ENCODE measurements at regions of chr20 and their contacts with region 1.

Region 1: DNA sequence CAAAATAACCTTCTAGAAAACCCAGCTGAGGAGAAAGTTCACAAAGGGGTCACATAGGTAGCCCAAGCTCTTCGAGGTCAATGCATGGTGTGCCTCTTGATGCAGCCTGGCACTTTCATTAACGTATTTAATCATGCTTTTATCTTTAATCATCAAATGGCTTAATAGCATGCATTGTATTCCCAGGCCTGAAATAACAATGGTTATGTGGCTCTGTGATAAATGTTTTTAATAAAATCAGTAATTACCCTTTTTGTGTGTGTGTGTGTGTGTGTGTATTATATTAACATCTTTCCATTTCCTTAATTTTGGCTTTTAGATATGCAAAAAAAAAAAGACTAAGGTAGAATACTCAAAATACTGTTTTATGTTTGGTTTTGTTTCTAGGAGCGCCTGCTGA is 681.8 kb downstream of the PTPRT start:
- DNase-seq: no peak
- H3K4me3 ChIP-seq: no peak overlapping the region
- H3K27ac ChIP-seq: no peak overlapping the region
- H3K4me1 ChIP-seq: no peaks in the 10 kb centered on the region
- H3K27me3 ChIP-seq: no peaks in the 10 kb centered on the region
- CTCF ChIP-seq: no peak

Region 2: DNA sequence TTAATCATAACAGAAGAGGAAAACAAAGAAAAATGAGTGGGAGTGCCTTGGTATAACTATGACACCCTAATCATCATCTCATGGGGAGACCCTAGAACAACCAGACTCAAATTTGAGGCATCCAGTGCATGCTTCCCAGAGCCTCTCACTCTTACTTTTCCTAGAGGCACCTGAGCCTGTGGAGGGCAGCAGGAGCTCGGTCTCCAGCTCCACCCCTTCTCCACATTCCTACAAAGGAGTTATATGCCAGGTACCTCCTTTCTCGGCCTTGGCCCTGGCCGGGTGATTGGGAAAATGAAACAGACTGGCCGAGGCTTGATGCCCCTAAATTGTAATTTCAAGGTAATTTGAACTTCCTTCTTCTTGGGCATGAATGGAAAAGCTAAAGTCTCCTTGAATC is 128.5 kb before region 1 on chr20:
- intact Hi-C with region 1: loop called (anchors 5 kb)
- DNase-seq: no peak
- H3K4me3 ChIP-seq: no peak overlapping the region
- H3K27ac ChIP-seq: no peak overlapping the region
- H3K4me1 ChIP-seq: no peaks in the 10 kb centered on the region
- H3K27me3 ChIP-seq: no peaks in the 10 kb centered on the region
- CTCF ChIP-seq: no peak

Region 3: GRCh38 chr20:42447270-42447669 is 60.6 kb before region 1 on chr20:
- intact Hi-C with region 1: no loop called
- DNase-seq: no peak
- H3K4me3 ChIP-seq: no peak overlapping the region
- H3K27ac ChIP-seq: no peak overlapping the region
- H3K4me1 ChIP-seq: no peaks in the 10 kb centered on the region
- H3K27me3 ChIP-seq: no peaks in the 10 kb centered on the region
- CTCF ChIP-seq: no peak

Region 4: DNA sequence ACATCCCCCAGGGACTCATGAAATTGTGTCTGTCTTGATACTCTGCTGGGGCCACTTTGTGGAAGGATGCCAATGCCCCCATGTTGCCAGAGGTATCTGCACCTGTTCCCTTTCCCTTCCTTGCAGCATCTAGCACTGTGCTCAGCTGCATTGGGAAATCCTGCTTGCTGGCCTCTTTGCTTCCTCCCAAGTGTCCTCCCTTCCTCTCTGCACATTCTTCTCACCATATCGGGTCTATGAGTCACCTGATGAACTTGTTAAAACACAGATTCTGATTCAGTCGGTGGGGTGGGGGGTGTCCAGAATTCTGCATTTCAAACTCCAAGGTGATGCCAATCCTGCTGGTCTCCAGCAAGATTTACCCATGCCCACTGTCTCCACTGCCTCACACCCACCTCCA is 214.0 kb after region 1 on chr20:
- intact Hi-C with region 1: no loop called
- DNase-seq: no peak
- H3K4me3 ChIP-seq: no peak overlapping the region
- H3K27ac ChIP-seq: no peak overlapping the region
- H3K4me1 ChIP-seq: no peaks in the 10 kb centered on the region
- H3K27me3 ChIP-seq: no peaks in the 10 kb centered on the region
- CTCF ChIP-seq: no peak